ENCODE measurements at regions of chr4 and their contacts with region 1.

Region 1: GRCh38 chr4:184583738-184584502 is 65.3 kb downstream of the CASP3 start:
- DNase-seq: no peak
- H3K4me3 ChIP-seq: no peak overlapping the region
- H3K27ac ChIP-seq: no peak overlapping the region
- H3K4me1 ChIP-seq: no peaks in the 10 kb centered on the region
- H3K27me3 ChIP-seq: no peaks in the 10 kb centered on the region
- CTCF ChIP-seq: no peak

Region 2: DNA sequence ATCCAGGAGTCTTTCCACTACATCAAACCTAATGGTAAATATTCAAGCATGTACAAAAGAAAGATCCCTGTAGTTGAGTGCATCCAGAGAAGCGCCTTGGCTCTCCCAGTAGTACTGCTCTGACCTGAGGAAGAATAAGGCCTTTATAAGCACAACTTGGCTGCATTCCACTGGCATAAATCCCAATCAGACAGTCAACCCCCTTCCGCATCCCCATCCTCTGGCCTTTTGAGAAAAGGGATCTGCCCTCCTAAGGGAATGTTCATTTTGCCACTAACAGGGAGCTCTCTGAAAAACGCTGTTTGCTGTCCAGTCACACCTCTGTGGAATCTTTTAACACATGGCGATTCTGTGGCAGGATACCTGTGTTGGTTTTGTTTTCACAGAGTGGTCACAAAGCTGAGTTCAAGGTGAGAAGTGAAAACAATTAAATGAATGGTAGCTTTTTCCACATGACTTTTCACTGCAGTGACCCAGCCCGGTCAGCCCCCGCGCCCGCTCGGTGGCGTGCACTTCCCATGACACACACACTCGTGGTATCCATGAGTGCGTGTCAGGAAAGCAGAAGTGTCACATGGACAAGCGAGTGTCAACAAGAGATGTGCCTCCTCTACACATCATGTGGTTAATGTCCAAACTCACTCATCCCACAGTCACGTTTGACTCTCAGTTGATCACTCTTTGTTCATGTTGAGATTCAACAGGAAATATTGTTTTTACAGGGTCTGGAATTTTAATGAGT is 254.1 kb before region 1 on chr4:
- intact Hi-C with region 1: no loop called
- DNase-seq: peak; percentile 65 to 77
- H3K4me3 ChIP-seq: no peak overlapping the region
- H3K27ac ChIP-seq: no peak overlapping the region
- H3K4me1 ChIP-seq: peaks cover 0 to 13% (median 5%) of the 10 kb centered on the region in 4 donors
- H3K27me3 ChIP-seq: no peaks in the 10 kb centered on the region
- CTCF ChIP-seq: no peak

Region 3: DNA sequence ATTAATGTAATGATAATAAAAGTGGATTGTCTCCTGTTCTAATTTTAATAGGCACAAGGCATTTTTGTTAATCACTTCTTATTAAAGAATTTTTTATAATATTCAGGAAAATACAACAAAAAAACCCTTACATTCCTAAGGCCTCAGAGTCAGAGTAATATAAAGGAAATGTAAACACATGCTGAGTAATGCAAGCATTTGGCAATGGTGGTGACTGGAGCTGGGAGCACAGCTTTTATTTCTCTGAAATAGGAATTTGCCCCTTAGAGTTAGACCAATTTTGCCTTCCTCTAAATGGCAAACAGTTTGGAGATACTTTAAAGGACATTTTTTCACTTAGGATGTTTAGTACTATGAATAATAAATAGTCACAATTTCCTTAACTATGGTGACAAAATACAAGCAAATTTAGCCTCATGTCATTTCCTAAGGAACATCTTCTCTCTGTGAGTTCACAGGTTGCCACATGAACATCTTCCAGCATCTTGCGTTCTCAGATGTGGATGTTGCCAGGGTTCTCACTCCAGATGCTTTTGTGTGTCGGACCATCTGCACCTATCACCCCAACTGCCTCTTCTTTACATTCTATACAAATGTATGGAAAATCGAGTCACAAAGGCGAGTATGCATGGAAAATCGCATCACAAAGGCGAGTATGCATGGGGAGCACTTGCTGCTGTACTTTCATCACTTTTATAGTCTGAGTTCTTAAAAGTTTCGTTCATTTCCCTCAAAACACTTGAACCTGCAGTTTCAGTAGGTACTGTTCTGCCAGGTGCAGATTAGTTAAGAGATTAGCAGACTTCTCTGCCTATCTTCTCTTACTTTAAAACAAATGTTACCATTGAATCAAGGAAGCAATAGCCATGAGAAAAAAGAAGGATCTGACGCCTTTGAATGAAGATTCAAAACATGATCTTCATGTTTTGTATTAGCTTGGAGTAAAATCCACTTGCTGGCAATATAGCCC is 1666.2 kb after region 1 on chr4:
- intact Hi-C with region 1: loop called (anchors 10 kb)
- DNase-seq: no peak
- H3K4me3 ChIP-seq: no peak overlapping the region
- H3K27ac ChIP-seq: no peak overlapping the region
- H3K4me1 ChIP-seq: no peaks in the 10 kb centered on the region
- H3K27me3 ChIP-seq: no peaks in the 10 kb centered on the region
- CTCF ChIP-seq: no peak